Mammary epithelial cell (primary cell): ENCODE measurements at regions of chr10 and their contacts with region 1.

Region 1: GRCh38 chr10:33542752-33543505 is 208.5 kb upstream of the NRP1 start:
- DNase-seq: peak; percentile 84
- H3K4me3 ChIP-seq: no peak overlapping the region
- H3K27ac ChIP-seq: peak overlapping the region; percentile 97
- H3K4me1 ChIP-seq: peaks cover 22% of the 10 kb centered on the region
- H3K27me3 ChIP-seq: no peaks in the 10 kb centered on the region
- CTCF ChIP-seq: no peak

Region 2: GRCh38 chr10:33052915-33053810 is 489.8 kb before region 1 on chr10:
- CTCF ChIA-PET with region 1: interaction called, 11 read pairs
- dilution Hi-C with region 1: no loop called
- in situ Hi-C with region 1: no loop called
- intact Hi-C with region 1: no loop called
- DNase-seq: no peak
- H3K4me3 ChIP-seq: no peak overlapping the region
- H3K27ac ChIP-seq: no peak overlapping the region
- H3K4me1 ChIP-seq: no peaks in the 10 kb centered on the region
- H3K27me3 ChIP-seq: no peaks in the 10 kb centered on the region
- CTCF ChIP-seq: no peak

Region 3: DNA sequence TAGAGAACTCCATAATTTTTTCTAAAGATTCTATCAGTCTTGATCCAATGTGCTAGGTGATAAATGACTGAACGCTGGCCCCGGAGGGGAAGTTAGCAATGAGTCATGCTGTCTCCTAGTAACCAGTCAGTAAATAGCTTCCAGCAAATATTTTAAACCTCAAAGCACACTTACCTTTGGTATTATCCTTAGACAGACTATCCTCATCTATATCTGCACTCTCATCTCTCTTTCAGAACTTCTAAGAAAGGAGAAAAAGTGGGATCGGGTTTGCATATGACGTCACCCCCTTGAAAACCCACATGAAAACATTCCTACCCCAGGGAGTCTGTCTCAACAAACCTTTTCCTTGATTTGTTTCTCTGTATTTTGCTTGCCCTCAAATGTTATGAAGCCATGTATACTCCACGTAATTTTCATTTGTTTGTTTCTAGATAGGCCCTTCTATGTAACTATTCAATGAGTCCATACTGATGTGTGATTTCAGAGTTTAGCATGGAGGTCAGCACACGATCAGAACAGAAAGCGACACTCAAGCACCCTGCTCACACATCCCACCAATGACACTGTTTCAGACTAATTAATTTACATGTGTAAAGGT is 33.6 kb before region 1 on chr10:
- CTCF ChIA-PET with region 1: no interaction called
- dilution Hi-C with region 1: no loop called
- in situ Hi-C with region 1: no loop called
- intact Hi-C with region 1: loop called (anchors 5 kb)
- DNase-seq: peak; percentile 91
- H3K4me3 ChIP-seq: no peak overlapping the region
- H3K27ac ChIP-seq: peak overlapping the region; percentile 77
- H3K4me1 ChIP-seq: peaks cover 17% of the 10 kb centered on the region
- H3K27me3 ChIP-seq: no peaks in the 10 kb centered on the region
- CTCF ChIP-seq: no peak

Region 4: DNA sequence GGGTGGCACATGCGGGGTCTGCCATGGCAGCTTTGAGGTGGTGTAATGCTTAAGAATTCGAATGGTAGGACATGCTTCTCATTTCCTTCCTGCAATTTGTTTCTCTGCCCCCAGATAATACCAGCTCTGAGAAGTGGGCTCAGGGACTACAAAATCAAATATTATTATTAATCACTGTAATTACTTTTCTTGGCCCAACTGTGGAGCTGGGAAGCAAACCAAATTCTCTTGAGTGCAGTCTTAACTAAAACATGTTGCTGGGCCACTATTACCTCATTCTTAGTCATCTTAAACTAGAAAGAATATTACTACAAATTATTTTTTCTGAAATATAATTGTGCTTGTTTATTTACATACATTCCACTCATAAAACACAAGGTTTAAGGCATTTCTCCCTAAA is 358.2 kb after region 1 on chr10:
- CTCF ChIA-PET with region 1: no interaction called
- dilution Hi-C with region 1: no loop called
- in situ Hi-C with region 1: no loop called
- intact Hi-C with region 1: loop called (anchors 10 kb)
- DNase-seq: peak; percentile 65
- H3K4me3 ChIP-seq: no peak overlapping the region
- H3K27ac ChIP-seq: peak overlapping the region; percentile 96
- H3K4me1 ChIP-seq: peaks cover 38% of the 10 kb centered on the region
- H3K27me3 ChIP-seq: no peaks in the 10 kb centered on the region
- CTCF ChIP-seq: peak in 1 of 2 donors; percentile 16